ENCODE measurements at regions of chr4 and their contacts with region 1.

Region 1: GRCh38 chr4:152500800-152501434 is 35.0 kb downstream of the FBXW7 start:
- ATAC-seq: peak; percentile 39 to 81 (median 66)
- H3K4me3 ChIP-seq: no peak overlapping the region
- H3K27ac ChIP-seq: no peak overlapping the region
- H3K4me1 ChIP-seq: peaks cover 7 to 10% of the 10 kb centered on the region in 2 donors

Region 2: DNA sequence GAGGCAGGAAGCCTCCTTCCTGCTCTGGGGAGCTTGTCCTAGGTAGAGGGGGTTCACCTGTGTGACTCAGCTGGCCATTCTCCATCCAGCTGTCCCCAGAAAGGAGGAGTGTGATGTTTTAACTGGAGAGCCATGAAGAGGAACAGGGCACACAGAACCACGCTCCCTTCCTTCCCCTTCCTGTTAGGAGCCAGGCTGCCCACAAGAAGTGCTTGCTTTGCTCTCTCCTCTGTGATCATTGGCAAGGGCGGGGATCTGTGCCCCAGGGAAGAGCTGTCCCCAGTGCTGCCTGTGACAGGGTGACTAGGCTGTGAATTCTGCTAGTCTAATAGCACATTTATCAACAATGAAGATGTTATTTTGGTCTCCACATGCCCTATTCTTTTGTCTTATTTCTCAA is 570.5 kb before region 1 on chr4:
- in situ Hi-C with region 1: no loop called
- ATAC-seq: peak in 3 of 8 experiments; percentile 28 to 73 (median 62)
- H3K4me3 ChIP-seq: no peak overlapping the region
- H3K27ac ChIP-seq: no peak overlapping the region
- H3K4me1 ChIP-seq: no peaks in the 10 kb centered on the region

Region 3: DNA sequence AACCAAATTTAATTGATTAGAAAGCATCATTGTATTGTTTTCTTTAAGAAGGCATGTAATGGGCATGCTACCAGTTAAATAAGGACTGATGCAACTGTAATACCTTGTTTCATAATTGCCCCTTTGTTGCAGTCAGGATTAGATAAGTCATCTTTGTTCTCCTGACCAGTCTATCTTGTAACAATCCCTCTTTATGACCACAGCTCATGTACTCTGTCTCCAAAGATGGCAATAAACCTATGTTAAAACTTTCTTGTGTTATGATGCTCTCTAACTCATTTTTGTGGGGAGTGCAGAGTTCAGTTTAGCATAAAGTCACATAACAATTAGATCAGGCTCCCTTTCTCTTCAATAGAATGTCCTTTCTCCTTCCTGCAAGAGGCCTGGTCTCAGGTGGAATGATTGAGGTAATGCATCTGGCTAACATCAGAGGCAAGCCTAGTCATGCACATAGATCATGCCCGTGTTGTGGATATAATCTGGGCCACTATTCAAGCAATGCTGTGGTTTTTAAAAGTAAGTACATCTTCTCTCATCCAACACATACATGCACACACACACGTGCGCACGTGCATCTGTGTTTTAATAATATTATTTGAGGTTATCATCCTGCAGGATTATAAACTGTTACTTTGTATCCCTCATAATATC is 133.3 kb after region 1 on chr4:
- in situ Hi-C with region 1: loop called in 3 of 9 experiments (anchors 10 to 25 kb)
- ATAC-seq: peak in 3 of 8 experiments; percentile 34 to 58 (median 57)
- H3K4me3 ChIP-seq: no peak overlapping the region
- H3K27ac ChIP-seq: no peak overlapping the region
- H3K4me1 ChIP-seq: peaks cover 0 to 6% of the 10 kb centered on the region in 2 donors

Region 4: GRCh38 chr4:152640058-152640833 is 139.3 kb after region 1 on chr4:
- in situ Hi-C with region 1: loop called in 3 of 9 experiments (anchors 10 to 25 kb)
- ATAC-seq: peak in 7 of 8 experiments; percentile 33 to 69 (median 54)
- H3K4me3 ChIP-seq: no peak overlapping the region
- H3K27ac ChIP-seq: no peak overlapping the region
- H3K4me1 ChIP-seq: peaks cover 6 to 12% of the 10 kb centered on the region in 2 donors

Region 5: DNA sequence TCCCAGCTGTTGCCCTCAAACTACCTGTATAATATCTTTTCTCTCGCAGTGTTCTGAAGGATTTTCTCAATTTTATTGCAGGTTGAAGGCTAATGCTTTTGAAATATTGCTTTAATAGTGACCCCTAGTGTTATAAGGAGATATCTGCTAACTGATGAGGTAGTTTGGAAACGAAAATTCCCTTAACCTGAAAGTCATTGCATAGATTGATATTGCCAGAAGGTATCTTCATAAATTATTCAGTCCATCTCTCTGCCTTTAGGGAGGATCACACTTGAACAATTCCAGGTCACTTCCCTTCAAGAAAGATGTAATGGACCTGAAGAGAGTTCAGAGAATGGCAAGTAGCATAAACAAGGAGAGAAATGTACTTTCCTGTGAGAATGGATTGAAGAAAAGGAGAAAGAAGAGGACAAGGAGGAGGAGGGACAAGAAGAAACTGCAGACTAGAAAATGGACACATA is 234.5 kb after region 1 on chr4:
- in situ Hi-C with region 1: loop called in 2 of 9 experiments (anchors 25 kb)
- ATAC-seq: peak in 3 of 8 experiments; percentile 33 to 55 (median 44)
- H3K4me3 ChIP-seq: no peak overlapping the region
- H3K27ac ChIP-seq: no peak overlapping the region
- H3K4me1 ChIP-seq: no peaks in the 10 kb centered on the region